Activated CD4-positive, alpha-beta T cell treated with anti-CD3 and anti-CD28 coated beads for 36 hours (primary cell): ENCODE measurements at regions of chr11 and their contacts with region 1.

Region 1: GRCh38 chr11:11798586-11799438 is 43.0 kb upstream of the USP47 start:
- DNase-seq: peak; percentile 89
- ATAC-seq: peak; percentile 93
- H3K4me3 Mint-ChIP-seq: no peak overlapping the region
- H3K27ac Mint-ChIP-seq: no peak overlapping the region
- H3K4me1 Mint-ChIP-seq: no peaks in the 10 kb centered on the region
- H3K27me3 Mint-ChIP-seq: peaks cover 21% of the 10 kb centered on the region

Region 2: GRCh38 chr11:11777897-11778296 is 20.9 kb before region 1 on chr11:
- CTCF ChIA-PET with region 1: interaction called, 10 read pairs
- POLR2A ChIA-PET with region 1: no interaction called
- intact Hi-C with region 1: no loop called
- DNase-seq: no peak
- ATAC-seq: peak; percentile 97
- H3K4me3 Mint-ChIP-seq: no peak overlapping the region
- H3K27ac Mint-ChIP-seq: no peak overlapping the region
- H3K4me1 Mint-ChIP-seq: no peaks in the 10 kb centered on the region
- H3K27me3 Mint-ChIP-seq: peaks cover 9% of the 10 kb centered on the region

Region 3: DNA sequence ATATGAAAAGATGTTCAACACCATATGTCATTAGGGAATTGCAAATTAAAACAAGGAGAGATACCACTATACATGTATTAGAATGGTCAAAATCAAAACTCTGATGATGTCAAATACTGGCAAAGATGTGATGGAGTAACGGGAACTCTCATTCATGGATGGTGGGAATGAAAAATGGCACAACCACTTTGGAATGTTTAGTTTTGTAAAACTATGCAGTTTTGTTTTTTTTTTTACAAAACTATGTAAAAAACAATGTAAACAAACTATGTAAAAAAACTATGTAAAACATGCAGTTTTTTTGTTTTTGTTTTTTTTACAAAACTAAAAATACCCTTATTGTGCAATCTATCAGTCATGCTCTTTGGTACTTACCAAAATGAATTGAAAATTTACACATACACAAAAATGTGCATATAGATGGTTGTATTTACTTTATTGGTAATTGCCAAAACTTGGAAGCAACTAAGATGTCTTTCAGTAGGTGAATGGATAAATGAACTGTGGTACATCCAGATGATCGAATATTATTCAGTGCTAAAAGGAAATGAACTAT is 37.9 kb after region 1 on chr11:
- CTCF ChIA-PET with region 1: no interaction called
- POLR2A ChIA-PET with region 1: no interaction called
- intact Hi-C with region 1: no loop called
- DNase-seq: no peak
- ATAC-seq: no peak
- H3K4me3 Mint-ChIP-seq: no peak overlapping the region
- H3K27ac Mint-ChIP-seq: no peak overlapping the region
- H3K4me1 Mint-ChIP-seq: peaks cover 3% of the 10 kb centered on the region
- H3K27me3 Mint-ChIP-seq: peaks cover 14% of the 10 kb centered on the region

Region 4: DNA sequence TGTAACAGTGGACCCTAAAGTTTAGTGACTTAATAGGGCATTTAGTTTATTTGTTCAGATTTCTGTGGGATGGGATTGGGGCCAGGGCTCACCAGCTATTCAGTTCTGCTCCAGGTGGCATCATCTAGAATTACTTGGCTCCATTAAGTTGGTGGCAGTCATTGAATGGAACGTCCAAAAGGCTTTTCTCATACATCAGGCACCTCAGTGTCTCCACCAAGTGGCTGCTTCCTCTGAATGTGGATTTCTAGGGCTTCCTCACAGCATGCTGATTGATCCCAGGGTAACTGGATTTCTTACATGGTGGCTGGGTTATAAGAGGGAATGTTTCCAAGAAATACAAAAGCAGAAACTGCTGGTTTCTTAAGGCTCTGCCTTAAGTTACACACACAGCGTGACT is 77.6 kb after region 1 on chr11:
- CTCF ChIA-PET with region 1: interaction called, 7 read pairs
- POLR2A ChIA-PET with region 1: interaction called, 10 read pairs
- intact Hi-C with region 1: loop called in 1 of 2 experiments (anchors 2 kb)
- DNase-seq: peak; percentile 23
- ATAC-seq: no peak
- H3K4me3 Mint-ChIP-seq: no peak overlapping the region
- H3K27ac Mint-ChIP-seq: no peak overlapping the region
- H3K4me1 Mint-ChIP-seq: peaks cover 44% of the 10 kb centered on the region
- H3K27me3 Mint-ChIP-seq: no peaks in the 10 kb centered on the region

Region 5: DNA sequence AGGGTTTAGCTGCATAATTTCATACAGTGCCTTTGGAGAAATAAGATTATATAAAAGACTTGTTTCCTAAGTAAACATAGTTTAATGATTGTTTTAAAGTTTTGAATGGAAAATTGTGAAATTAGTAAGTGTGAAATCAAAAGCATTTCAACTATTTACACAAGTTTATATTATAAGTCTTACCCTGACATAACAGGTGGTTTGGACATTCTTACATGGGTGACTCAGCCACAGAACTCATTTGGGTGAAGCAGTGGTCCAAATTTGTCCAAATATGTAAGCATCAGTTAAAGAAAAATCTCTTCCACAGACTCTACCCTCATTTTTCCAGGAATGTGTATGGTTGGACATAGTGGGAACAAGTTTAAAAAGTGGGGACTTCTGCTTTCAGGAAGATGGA is 110.9 kb after region 1 on chr11:
- CTCF ChIA-PET with region 1: interaction called, 16 read pairs
- POLR2A ChIA-PET with region 1: no interaction called
- intact Hi-C with region 1: no loop called
- DNase-seq: no peak
- ATAC-seq: no peak
- H3K4me3 Mint-ChIP-seq: no peak overlapping the region
- H3K27ac Mint-ChIP-seq: no peak overlapping the region
- H3K4me1 Mint-ChIP-seq: no peaks in the 10 kb centered on the region
- H3K27me3 Mint-ChIP-seq: no peaks in the 10 kb centered on the region

Region 6: DNA sequence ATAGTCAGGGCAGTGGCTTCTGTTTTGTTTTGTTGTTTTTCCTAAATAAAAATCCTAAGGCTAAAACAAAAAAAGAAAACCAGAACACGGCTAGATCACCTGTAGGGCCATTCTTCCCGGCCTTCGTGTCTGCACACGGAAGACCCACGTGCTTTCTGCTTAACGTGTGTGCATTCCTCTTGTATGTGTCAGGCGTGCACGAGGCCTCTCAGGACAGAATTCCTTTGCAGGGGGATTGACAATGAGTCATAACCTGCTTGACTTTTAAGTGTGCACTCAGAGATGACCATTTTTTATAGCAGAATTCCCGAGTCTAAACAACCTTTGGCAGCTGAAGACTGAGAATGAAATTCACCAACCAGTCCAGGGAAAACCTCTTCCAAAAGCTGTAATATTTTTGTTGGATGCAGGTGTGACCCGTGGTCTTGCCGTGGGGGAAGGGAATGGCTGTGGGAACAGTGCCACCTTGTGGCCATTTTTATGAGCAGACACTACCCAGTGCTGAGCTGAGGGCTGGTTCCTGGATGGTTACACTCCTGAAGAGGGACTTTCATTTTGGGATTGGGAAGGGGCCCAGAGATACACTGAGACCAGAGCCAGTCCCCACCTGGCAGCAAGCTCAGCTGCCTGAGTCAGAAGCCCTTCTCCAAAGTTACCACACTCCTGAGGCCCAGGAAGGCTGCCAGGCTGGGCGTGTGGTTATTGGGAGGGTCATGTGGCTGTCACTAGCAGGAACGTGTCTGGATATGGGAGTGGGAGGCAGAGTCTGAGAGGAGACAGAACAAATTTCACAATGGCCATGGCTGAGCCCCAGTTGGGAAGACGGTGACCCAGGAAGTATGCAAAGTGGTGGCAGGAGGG is 245.4 kb after region 1 on chr11:
- CTCF ChIA-PET with region 1: interaction called, 18 read pairs
- POLR2A ChIA-PET with region 1: no interaction called
- intact Hi-C with region 1: loop called (anchors 1 to 2 kb)
- DNase-seq: peak; percentile 80
- ATAC-seq: peak; percentile 73
- H3K4me3 Mint-ChIP-seq: no peak overlapping the region
- H3K27ac Mint-ChIP-seq: no peak overlapping the region
- H3K4me1 Mint-ChIP-seq: peaks cover 11% of the 10 kb centered on the region
- H3K27me3 Mint-ChIP-seq: peaks cover 4% of the 10 kb centered on the region